ENCODE measurements at regions of chr7 and their contacts with region 1.

Region 1: GRCh38 chr7:74094224-74095101 is 10.9 kb downstream of the LIMK1 start:
- DNase-seq: peak; percentile 86
- H3K4me3 Mint-ChIP-seq: peak overlapping the region; percentile 71
- H3K27ac Mint-ChIP-seq: peak overlapping the region; percentile 97
- H3K4me1 Mint-ChIP-seq: peaks cover 26% of the 10 kb centered on the region
- H3K27me3 Mint-ChIP-seq: no peaks in the 10 kb centered on the region

Region 2: DNA sequence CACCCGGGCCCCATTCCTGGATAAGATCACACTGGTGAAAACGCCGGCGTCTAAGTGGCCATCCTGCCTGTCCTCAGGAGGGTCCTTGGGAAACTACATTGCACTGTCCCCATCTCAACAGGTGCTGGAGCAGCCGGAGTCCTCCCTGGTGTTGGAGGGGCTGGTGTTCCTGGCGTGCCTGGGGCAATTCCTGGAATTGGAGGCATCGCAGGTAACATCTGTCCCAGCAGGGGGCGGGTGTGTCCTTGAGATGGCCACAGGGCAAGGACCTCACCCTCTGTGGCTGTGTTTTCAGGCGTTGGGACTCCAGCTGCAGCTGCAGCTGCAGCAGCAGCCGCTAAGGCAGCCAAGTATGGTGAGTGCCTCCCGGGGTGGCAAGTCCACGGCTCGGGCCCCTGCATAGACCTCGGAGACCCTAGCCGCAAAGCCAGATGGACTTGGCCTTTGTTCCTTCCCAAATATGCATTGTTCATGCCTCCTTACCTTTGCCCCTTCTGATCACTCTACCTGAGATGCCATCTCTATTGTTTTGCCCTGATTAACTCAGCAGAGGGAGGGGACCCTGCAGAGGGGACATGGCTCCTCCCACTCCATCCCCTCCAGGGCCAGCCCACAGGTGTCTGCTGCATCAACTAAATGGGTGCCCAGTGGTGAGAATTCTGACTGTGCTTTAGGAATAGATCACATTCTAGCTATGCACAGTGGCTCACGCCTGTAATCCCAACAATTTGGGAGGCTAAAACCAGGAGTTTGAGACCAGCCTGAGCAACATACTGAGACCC is 42.6 kb before region 1 on chr7:
- CTCF ChIA-PET with region 1: no interaction called
- POLR2A ChIA-PET with region 1: no interaction called
- DNase-seq: no peak
- H3K4me3 Mint-ChIP-seq: no peak overlapping the region
- H3K27ac Mint-ChIP-seq: no peak overlapping the region
- H3K4me1 Mint-ChIP-seq: no peaks in the 10 kb centered on the region
- H3K27me3 Mint-ChIP-seq: no peaks in the 10 kb centered on the region

Region 3: GRCh38 chr7:74083117-74083876 is 11.2 kb before region 1 on chr7 and contains the start of gene LIMK1:
- CTCF ChIA-PET with region 1: no interaction called
- POLR2A ChIA-PET with region 1: interaction called, 50 read pairs
- DNase-seq: peak; percentile 85
- H3K4me3 Mint-ChIP-seq: peak within 1 kb of the TSS; percentile 79
- H3K27ac Mint-ChIP-seq: peak within 1 kb of the TSS; percentile 78
- H3K4me1 Mint-ChIP-seq: peaks cover 15% of the 10 kb centered on the region
- H3K27me3 Mint-ChIP-seq: no peaks in the 10 kb centered on the region
- total RNA-seq, gene LIMK1: 22.5 to 26.1 TPM

Region 4: DNA sequence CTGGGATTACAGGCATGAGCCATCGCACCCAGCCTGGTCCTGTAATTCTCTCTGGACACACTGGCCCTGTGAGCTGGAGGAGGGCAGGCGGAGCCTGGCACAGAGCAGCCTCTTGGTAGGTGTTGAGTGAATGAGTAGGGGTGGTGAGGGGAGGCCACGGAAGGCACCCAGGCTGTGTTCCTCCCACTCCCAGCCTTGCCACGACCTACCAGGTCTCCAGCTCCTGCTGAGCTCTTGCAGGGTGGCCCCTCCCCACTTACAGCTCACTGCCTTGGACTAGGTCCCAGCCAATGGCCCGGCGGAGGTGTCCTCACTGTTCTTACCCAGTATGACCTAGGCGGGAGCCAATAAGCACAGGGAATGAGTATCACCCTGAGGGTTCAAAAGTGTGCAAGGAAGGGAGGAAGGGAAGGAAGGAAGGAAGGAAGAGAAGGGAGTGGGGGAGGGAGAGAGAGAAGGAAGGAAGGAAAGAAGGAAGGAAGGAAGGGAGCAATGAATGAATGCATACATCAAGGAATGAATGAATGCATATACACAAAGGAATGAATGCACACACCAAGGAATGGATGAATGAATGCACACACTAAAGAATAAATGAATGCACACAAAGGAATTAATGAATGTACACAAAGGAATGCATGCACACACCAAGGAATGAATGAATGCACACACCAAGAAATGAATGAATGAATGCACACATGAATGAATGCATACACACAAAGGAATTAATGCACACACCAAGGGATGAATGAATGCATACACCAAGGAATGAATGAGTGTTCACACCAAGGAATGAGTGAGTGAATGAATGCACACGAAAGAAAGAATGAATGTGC is 404.8 kb after region 1 on chr7:
- CTCF ChIA-PET with region 1: no interaction called
- POLR2A ChIA-PET with region 1: no interaction called
- DNase-seq: no peak
- H3K4me3 Mint-ChIP-seq: no peak overlapping the region
- H3K27ac Mint-ChIP-seq: no peak overlapping the region
- H3K4me1 Mint-ChIP-seq: no peaks in the 10 kb centered on the region
- H3K27me3 Mint-ChIP-seq: no peaks in the 10 kb centered on the region

Measured in activated CD4-positive, alpha-beta memory T cell treated with anti-CD3 and anti-CD28 coated beads, Interleukin-2, amount 10 ng/mL, durations not matched to agents 7 days and 5 days (primary cell).